Posterior cingulate gyrus (tissue), 11 donors: ENCODE measurements at regions of chr7 and their contacts with region 1.

Region 1: GRCh38 chr7:117385340-117386109 is 41.8 kb downstream of the ASZ1 start:
- DNase-seq: no peak

Region 2: DNA sequence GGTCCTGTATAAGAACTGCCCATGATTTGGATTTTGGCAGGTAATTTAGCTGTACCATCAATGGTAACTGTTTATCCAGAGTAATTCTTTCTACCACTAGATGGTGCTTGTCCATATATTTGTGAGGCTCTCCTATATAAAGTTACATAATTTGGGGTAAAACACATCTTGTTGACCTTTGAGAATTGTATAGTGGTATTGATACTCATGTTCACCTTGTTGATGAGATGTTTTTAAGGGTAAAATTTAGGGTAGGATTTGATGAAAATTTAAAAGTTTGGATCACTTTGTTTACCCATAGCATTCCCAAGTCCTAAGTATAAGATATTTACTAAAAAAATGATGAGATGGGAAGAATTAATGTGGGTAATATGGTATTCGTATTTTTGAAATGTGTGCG is 400.6 kb before region 1 on chr7:
- intact Hi-C with region 1: loop called (anchors 10 kb)
- DNase-seq: no peak

Region 3: DNA sequence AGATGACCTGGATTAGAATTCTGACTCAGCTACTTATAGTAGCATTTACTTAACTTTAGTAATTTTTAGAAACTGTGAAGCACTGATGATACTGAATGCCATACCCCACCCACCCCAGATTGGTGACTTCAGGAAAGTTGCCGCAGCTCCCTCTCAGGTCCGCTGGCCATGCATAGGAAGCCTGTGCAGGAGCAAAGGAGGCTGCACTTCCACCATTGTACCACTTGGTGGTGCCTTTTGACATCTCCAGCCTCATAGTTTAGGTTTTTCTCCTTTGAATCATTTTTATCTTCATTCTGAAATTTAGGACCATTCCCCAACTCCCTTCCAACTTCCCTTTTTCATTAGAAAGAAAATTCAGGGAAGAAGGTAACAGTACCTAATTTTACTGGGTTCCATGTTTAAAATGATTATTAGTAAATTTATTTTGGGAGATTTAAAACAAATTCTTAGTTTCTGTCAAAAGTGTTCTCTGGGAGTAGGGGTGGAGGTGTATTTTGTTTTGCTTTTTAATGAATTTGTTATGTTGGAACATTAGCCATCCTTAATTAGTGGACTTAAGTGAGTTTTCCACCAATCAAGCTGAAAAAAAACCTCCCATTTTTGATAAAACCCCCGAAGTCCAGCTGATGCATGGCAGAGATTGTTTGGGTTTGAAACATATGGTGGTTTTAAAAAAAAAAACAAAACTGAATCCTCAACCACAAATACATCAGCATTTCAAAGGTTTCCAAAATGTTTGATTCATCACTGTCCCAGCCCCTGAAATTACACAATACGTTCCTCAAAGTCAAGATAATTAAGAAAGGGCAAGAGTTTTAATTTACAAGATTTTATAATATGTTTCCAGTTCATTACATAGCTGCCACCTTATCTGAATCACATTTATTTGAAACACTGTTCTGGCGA is 172.3 kb before region 1 on chr7:
- intact Hi-C with region 1: loop called (anchors 2 kb)
- DNase-seq: peak in 7 of 10 donors; percentile 51 to 86 (median 59)

Region 4: GRCh38 chr7:117312598-117313580 is 72.6 kb before region 1 on chr7:
- intact Hi-C with region 1: loop called (anchors 5 kb)
- DNase-seq: no peak

Region 5: DNA sequence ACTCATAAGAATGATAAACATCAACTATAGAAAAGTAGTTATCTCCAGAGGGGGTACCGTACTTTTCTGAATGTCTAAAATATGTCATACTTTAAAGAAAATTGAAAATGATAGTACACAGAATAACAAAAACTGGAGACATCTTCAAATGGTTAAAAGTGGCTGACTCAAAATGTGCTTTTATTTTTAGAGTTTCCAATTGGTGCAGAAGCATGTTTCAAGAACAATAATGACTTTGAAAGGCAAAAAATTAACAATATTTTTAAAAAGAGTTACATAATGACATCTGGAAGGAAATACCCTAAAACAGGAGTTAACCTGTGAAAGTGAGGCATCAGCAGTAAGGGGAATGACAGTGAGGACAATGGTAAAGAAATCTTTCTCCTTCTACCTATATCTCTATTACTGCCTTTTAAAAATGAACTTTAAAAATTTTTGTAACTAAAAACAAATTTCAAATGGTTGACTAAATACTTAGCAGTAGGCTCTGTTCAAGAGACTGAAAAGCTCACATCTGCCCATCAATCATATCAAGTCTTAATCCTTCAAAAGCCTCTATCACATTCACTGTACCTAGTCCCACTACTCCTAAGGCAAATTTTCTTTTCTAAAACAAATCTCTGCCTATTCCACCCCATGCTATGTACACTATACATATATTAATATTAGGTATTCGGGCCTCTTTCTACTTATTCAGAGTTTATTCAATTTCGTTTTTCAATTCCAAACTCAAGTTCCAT is 38.7 kb after region 1 on chr7:
- intact Hi-C with region 1: no loop called
- DNase-seq: no peak